Activated T-helper 1 cell treated with anti-CD3 and anti-CD28 coated beads, Interleukin-12 subunit alpha, Interleukin-12 subunit beta, Interleukin-2, Interleukin-4 antibody, amounts not matched to agents 30 ng/mL and 10 ng/mL and 1 ng/mL, durations not matched to agents 14 hours and 24 hours and 36 hours (primary cell): ENCODE measurements at regions of chr5 and their contacts with region 1.

Region 1: GRCh38 chr5:54243473-54244080 is 66.8 kb downstream of the ARL15 start:
- DNase-seq: no peak
- H3K4me3 Mint-ChIP-seq: no peak overlapping the region
- H3K27ac Mint-ChIP-seq: no peak overlapping the region
- H3K4me1 Mint-ChIP-seq: no peaks in the 10 kb centered on the region
- H3K27me3 Mint-ChIP-seq: peaks cover 4% of the 10 kb centered on the region

Region 2: GRCh38 chr5:54007827-54008777 is 235.5 kb before region 1 on chr5:
- intact Hi-C with region 1: no loop called
- DNase-seq: no peak
- H3K4me3 Mint-ChIP-seq: no peak overlapping the region
- H3K27ac Mint-ChIP-seq: no peak overlapping the region
- H3K4me1 Mint-ChIP-seq: peaks cover 2% of the 10 kb centered on the region
- H3K27me3 Mint-ChIP-seq: no peaks in the 10 kb centered on the region

Region 3: DNA sequence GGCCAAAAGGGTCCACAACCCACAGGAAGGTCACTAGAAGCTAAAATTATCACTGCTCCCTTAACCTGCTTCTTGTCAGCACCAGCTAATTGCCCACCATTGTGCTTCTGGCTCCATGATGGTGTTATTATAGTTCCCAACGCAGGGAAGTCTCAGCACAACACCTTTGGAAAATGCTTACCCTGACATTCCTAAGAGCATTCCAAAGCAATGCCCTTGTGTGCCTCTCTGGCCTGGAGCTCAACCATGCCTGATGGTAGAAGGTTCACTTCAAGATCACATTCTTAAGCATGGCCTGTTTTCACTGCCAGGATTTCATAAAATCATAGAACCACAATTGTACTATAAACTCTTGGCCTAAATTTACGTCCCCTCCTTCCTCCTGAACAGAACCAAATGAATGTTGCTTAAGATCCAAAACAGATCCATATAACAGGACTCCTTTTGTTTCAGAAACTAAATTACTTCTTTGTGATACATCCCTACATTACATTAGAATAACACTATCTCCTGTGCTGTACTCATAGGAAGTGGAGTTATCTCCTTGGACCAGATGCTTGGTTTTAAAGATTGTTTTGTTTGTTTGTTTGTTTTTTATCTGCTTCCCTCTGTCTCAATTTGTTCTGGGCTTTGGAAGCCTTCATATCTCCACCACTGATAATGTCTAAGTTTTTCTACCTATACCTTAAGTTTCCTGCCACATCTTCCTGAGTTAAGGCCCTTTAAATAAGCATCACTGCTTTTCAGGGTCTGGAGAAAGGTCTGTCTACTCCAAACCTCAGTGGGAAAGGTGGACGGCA is 34.7 kb after region 1 on chr5:
- intact Hi-C with region 1: no loop called
- DNase-seq: no peak
- H3K4me3 Mint-ChIP-seq: no peak overlapping the region
- H3K27ac Mint-ChIP-seq: no peak overlapping the region
- H3K4me1 Mint-ChIP-seq: no peaks in the 10 kb centered on the region
- H3K27me3 Mint-ChIP-seq: no peaks in the 10 kb centered on the region

Region 4: GRCh38 chr5:54415896-54416601 is 172.5 kb after region 1 on chr5:
- intact Hi-C with region 1: loop called (anchors 1 kb)
- DNase-seq: no peak
- H3K4me3 Mint-ChIP-seq: no peak overlapping the region
- H3K27ac Mint-ChIP-seq: no peak overlapping the region
- H3K4me1 Mint-ChIP-seq: no peaks in the 10 kb centered on the region
- H3K27me3 Mint-ChIP-seq: peaks cover 25% of the 10 kb centered on the region

Region 5: DNA sequence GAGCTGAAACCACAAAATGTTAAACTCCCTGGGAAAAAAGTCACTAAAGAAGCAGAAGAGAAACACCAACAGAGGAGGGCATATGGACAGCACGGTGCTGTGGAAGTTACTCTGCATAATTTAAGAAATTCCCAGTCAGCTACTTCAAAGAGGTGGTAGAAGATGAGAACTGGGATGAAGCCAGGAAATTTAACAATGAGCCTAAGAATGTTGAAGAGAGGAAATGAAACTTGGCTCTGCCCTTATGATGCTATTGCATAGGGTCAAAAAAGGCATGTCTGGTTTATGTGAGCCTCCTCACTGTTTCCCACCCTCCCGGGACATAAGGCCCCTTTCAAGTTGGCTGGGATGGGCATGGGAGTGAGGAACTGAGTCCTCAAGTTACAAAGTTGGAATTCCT is 248.6 kb after region 1 on chr5:
- intact Hi-C with region 1: loop called (anchors 1 kb)
- DNase-seq: no peak
- H3K4me3 Mint-ChIP-seq: no peak overlapping the region
- H3K27ac Mint-ChIP-seq: no peak overlapping the region
- H3K4me1 Mint-ChIP-seq: no peaks in the 10 kb centered on the region
- H3K27me3 Mint-ChIP-seq: peaks cover 11% of the 10 kb centered on the region

Region 6: GRCh38 chr5:55159763-55160492 is 916.4 kb after region 1 on chr5 and contains the start of gene GPX8:
- intact Hi-C with region 1: loop called (anchors 10 kb)
- DNase-seq: no peak
- H3K4me3 Mint-ChIP-seq: no peak within 1 kb of the TSS
- H3K27ac Mint-ChIP-seq: no peak within 1 kb of the TSS
- H3K4me1 Mint-ChIP-seq: peaks cover 8% of the 10 kb centered on the region
- H3K27me3 Mint-ChIP-seq: peaks cover 64% of the 10 kb centered on the region
- total RNA-seq, gene GPX8: not detected in 2 replicates